Tibial artery (tissue), 4 donors: ENCODE measurements at regions of chr3 and their contacts with region 1.

Region 1: GRCh38 chr3:9946112-9947024 is 5.8 kb downstream of the PRRT3 start:
- DNase-seq: peak; percentile 84 to 93
- H3K4me3 ChIP-seq: peak overlapping the region; percentile 63 to 70
- H3K27ac ChIP-seq: peak overlapping the region; percentile 85 to 96
- H3K4me1 ChIP-seq: peaks cover 0 to 19% (median 13%) of the 10 kb centered on the region in 4 donors
- H3K27me3 ChIP-seq: no peaks in the 10 kb centered on the region
- CTCF ChIP-seq: peak; percentile 72 to 77

Region 2: GRCh38 chr3:9715764-9716437 is 230.5 kb before region 1 on chr3:
- intact Hi-C with region 1: no loop called
- DNase-seq: peak; percentile 86 to 89
- H3K4me3 ChIP-seq: no peak overlapping the region
- H3K27ac ChIP-seq: peak overlapping the region; percentile 56 to 64
- H3K4me1 ChIP-seq: peaks cover 0 to 15% (median 5%) of the 10 kb centered on the region in 4 donors
- H3K27me3 ChIP-seq: no peaks in the 10 kb centered on the region
- CTCF ChIP-seq: peak; percentile 81 to 82

Region 3: DNA sequence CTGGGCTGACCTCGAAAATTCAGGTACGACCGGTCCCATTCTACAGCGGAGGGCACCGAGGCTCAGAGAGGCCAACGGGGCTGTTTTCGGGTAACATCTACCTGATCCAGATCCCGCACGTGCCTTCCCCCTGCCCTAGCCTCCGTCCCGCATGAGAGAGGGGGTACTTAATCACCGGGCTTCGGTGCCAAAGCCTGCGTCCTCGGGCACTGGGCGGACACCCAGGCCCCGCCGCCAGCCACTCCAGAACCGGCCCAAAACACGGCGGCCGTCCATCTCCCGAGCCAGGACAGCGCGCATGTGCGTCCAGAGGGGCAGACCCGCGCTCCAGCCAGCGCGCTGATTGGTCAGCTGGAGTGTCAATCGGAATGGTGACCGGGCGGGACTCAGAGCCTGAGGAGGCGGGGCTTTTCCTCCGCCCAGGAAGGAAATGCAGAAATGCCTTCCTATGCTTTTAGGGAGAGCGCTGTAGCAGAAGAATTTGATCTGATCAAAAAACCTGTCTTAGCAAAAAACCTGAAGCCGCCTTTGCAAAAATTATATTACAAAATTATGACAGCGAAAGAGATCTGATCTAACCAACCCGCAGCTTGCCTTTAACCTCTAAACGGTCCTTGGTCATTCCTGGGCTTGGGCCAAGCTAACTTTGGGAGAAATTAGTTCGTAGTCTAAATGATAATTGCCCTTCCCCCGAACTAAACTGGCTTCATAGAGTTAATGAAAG is 102.5 kb before region 1 on chr3 and contains the start of gene RPUSD3:
- intact Hi-C with region 1: loop called (anchors 10 kb)
- DNase-seq: peak; percentile 98 to 99
- H3K4me3 ChIP-seq: peak within 1 kb of the TSS; percentile 61 to 85
- H3K27ac ChIP-seq: peak within 1 kb of the TSS; percentile 80 to 84
- H3K4me1 ChIP-seq: peaks cover 0 to 16% (median 12%) of the 10 kb centered on the region in 4 donors
- H3K27me3 ChIP-seq: no peaks in the 10 kb centered on the region
- CTCF ChIP-seq: no peak

Region 4: GRCh38 chr3:9976721-9977709 is 30.6 kb after region 1 on chr3:
- intact Hi-C with region 1: loop called (anchors 2 kb)
- DNase-seq: peak; percentile 88 to 92
- H3K4me3 ChIP-seq: no peak overlapping the region
- H3K27ac ChIP-seq: peak overlapping the region; percentile 77 to 79
- H3K4me1 ChIP-seq: peaks cover 0 to 28% (median 14%) of the 10 kb centered on the region in 4 donors
- H3K27me3 ChIP-seq: no peaks in the 10 kb centered on the region
- CTCF ChIP-seq: no peak

Region 5: DNA sequence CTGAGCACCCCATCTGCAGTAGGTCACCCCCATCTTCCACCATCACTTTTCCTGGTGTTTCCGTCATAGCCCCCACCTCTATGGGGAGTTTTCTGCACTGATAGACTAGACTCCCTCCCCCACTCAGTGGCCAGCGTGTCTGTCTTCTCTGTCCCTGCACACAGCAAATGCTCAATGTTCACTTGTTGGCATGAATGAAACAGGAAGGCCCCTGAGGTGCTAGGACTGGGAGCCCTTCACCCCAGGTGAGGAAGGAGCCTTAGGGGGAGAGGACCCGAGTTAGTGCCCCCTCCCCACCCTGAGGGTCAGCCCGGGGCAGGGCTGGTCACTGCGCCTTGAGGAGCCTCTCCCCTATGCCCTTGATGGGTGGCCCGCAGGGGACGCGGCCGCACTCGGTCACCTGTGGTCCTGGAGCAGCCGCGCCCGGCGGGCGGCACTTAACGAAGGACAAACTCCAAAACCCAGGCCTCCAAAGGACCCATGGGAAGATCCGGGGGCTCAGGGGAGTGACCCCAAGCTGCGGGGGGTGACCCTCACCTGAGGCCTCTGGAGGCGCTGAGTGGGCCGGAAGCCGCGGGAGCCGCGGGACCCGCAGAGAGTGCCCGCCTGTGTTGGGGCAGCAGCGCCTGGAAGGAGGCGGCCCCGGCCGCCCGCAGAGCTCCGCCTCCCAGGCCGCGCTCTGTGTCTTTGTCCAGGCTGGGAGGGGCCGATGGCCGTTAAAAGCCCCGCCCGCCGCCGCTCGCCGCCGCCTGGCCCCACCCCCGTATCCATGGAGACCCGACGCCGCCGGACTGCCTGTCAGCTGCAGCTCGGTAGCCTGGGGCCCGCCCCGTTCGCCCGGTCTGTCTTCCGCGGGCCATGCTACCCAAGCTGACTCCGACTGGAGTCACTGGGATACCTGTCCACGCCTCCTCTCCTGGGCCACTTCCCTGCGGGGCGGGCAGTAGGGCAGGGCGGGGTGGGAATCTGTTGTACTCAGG is 64.4 kb after region 1 on chr3:
- intact Hi-C with region 1: loop called (anchors 10 kb)
- DNase-seq: peak; percentile 95 to 98
- H3K4me3 ChIP-seq: peak overlapping the region; percentile 57 to 87
- H3K27ac ChIP-seq: peak overlapping the region; percentile 80
- H3K4me1 ChIP-seq: peaks cover 0 to 52% (median 41%) of the 10 kb centered on the region in 4 donors
- H3K27me3 ChIP-seq: no peaks in the 10 kb centered on the region
- CTCF ChIP-seq: no peak

Region 6: GRCh38 chr3:10136426-10137005 is 190.1 kb after region 1 on chr3:
- intact Hi-C with region 1: no loop called
- DNase-seq: no peak
- H3K4me3 ChIP-seq: no peak overlapping the region
- H3K27ac ChIP-seq: no peak overlapping the region
- H3K4me1 ChIP-seq: no peaks in the 10 kb centered on the region
- H3K27me3 ChIP-seq: no peaks in the 10 kb centered on the region
- CTCF ChIP-seq: no peak